Activated CD4-positive, alpha-beta memory T cell treated with anti-CD3 and anti-CD28 coated beads for 36 hours (primary cell): ENCODE measurements at regions of chrX and their contacts with region 1.

Region 1: DNA sequence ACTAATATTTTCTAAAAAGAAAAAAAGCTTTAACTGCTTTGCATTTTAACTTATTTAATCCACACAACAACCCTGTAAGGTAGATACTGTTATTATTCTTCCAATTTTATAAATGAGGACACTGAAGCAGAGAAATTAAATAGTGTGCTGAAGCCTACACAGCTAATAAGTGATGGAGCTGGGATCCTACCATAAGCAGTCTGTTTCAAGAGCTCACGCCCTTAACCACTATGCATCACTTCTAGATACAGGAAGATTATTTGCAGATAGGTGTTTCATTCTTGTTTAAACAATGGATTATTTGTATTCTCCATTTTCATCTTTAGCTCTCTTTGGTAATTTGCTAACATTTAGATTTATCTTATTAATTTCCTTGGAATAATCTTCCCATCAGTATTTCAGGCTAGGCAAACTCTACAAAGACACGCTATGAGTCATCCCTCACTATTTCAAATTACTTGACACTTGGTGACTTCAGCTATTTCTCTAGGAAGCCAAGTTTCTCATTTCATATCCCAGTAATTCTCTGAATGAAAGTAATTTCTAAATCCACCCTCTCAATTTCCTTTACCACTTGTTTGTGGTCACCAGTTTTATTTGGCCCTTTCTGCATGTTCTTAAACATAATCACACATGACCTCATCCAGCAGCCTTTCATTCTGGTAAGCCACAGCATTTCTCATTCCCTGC is 67.3 kb downstream of the ASB9 start:
- DNase-seq: no peak
- H3K4me3 Mint-ChIP-seq: no peak overlapping the region
- H3K27ac Mint-ChIP-seq: no peak overlapping the region
- H3K4me1 Mint-ChIP-seq: peaks cover 47% of the 10 kb centered on the region
- H3K27me3 Mint-ChIP-seq: no peaks in the 10 kb centered on the region

Region 2: DNA sequence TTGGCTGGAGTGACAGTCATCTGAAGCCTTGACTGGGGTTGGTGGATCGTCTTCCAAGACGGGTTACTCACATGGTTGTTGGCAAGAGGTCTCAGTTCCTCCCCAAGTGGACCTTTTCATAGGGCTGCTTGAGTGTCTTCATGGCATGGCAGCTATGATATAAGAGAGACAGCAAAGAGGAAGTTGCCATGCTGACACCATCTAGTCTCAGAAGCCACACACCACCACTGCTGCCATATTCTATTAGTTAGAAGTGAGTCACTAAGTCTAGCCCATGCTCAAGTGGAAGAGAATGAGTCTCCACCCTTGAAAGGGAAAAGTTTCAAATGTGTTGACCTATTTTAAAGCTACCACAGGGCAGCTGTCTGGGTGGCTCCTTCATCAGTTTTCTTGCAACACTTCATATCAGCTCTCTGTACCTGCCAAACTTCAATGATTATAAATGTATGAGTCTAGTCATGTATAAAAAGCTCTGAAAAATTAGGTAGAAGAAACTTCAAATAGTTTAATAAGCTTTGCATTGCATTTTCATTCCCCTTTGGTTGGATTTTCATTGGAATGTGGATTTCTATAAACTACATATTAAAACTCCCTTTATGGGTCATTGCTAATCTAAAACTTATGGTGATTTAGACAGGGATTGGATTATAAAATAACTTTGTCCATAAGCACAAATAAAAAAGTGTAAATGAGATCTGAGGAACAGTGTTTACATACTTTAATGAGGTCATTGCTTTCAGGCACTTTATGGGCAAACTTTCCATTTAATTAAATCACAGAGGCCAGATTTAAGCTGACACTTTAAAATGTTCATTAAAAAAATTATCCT is 1814.7 kb before region 1 on chrX:
- CTCF ChIA-PET with region 1: no interaction called
- POLR2A ChIA-PET with region 1: no interaction called
- intact Hi-C with region 1: no loop called
- DNase-seq: peak; percentile 34
- H3K4me3 Mint-ChIP-seq: no peak overlapping the region
- H3K27ac Mint-ChIP-seq: no peak overlapping the region
- H3K4me1 Mint-ChIP-seq: peaks cover 8% of the 10 kb centered on the region
- H3K27me3 Mint-ChIP-seq: no peaks in the 10 kb centered on the region

Region 3: DNA sequence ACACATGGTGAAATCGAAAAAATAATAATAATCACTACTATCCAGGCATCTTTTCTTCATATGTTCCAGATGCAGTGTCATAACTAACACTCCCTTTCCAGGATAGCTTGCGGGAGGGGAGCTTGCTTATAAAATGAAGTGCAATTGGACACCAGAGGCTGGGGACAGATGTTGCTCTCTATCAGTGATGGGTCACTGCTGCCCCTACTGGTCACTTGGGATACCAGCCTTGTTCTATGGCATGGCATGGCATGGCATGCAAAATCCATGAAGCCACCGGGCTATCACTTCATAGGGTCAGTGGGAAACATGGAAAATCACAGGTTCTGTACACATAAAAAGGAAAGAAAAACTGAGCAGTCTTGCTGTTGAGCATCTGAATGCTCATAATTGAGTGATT is 505.1 kb before region 1 on chrX:
- CTCF ChIA-PET with region 1: no interaction called
- POLR2A ChIA-PET with region 1: no interaction called
- intact Hi-C with region 1: no loop called
- DNase-seq: peak; percentile 26
- H3K4me3 Mint-ChIP-seq: no peak overlapping the region
- H3K27ac Mint-ChIP-seq: no peak overlapping the region
- H3K4me1 Mint-ChIP-seq: no peaks in the 10 kb centered on the region
- H3K27me3 Mint-ChIP-seq: no peaks in the 10 kb centered on the region

Region 4: GRCh38 chrX:14798805-14799397 is 403.7 kb before region 1 on chrX:
- CTCF ChIA-PET with region 1: no interaction called
- POLR2A ChIA-PET with region 1: no interaction called
- intact Hi-C with region 1: loop called (anchors 1 kb)
- DNase-seq: peak; percentile 12
- H3K4me3 Mint-ChIP-seq: no peak overlapping the region
- H3K27ac Mint-ChIP-seq: no peak overlapping the region
- H3K4me1 Mint-ChIP-seq: peaks cover 18% of the 10 kb centered on the region
- H3K27me3 Mint-ChIP-seq: peaks cover 2% of the 10 kb centered on the region

Region 5: DNA sequence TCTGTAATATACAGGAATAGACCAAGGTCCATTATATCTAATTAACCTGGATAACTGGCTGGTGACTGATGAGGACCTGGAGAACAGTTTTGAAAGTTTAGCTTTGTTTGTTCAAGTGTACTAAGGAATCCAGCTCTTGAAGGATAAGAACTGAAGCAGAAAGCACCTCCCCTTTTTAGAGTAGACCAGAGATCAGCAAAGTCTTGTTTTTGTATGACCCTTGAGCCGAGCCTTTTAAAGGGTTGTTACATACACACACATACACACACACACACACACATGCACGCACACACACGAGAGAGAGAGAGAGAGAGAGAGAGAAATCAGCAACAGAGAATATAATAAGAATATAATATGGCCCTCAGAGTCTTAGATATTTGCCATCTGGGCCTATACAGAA is 316.3 kb before region 1 on chrX:
- CTCF ChIA-PET with region 1: no interaction called
- POLR2A ChIA-PET with region 1: no interaction called
- intact Hi-C with region 1: loop called (anchors 2 kb)
- DNase-seq: no peak
- H3K4me3 Mint-ChIP-seq: no peak overlapping the region
- H3K27ac Mint-ChIP-seq: no peak overlapping the region
- H3K4me1 Mint-ChIP-seq: peaks cover 35% of the 10 kb centered on the region
- H3K27me3 Mint-ChIP-seq: no peaks in the 10 kb centered on the region

Region 6: GRCh38 chrX:15116900-15117299 is 85.7 kb before region 1 on chrX:
- CTCF ChIA-PET with region 1: no interaction called
- POLR2A ChIA-PET with region 1: no interaction called
- intact Hi-C with region 1: loop called (anchors 1 kb)
- DNase-seq: no peak
- H3K4me3 Mint-ChIP-seq: no peak overlapping the region
- H3K27ac Mint-ChIP-seq: no peak overlapping the region
- H3K4me1 Mint-ChIP-seq: peaks cover 8% of the 10 kb centered on the region
- H3K27me3 Mint-ChIP-seq: no peaks in the 10 kb centered on the region

Region 7: GRCh38 chrX:15158736-15159406 is 43.7 kb before region 1 on chrX:
- CTCF ChIA-PET with region 1: interaction called, 5 read pairs
- POLR2A ChIA-PET with region 1: interaction called, 4 read pairs
- intact Hi-C with region 1: loop called (anchors 1 kb)
- DNase-seq: peak; percentile 51
- H3K4me3 Mint-ChIP-seq: peak overlapping the region; percentile 57
- H3K27ac Mint-ChIP-seq: peak overlapping the region; percentile 70
- H3K4me1 Mint-ChIP-seq: peaks cover 34% of the 10 kb centered on the region
- H3K27me3 Mint-ChIP-seq: peaks cover 2% of the 10 kb centered on the region

Region 8: DNA sequence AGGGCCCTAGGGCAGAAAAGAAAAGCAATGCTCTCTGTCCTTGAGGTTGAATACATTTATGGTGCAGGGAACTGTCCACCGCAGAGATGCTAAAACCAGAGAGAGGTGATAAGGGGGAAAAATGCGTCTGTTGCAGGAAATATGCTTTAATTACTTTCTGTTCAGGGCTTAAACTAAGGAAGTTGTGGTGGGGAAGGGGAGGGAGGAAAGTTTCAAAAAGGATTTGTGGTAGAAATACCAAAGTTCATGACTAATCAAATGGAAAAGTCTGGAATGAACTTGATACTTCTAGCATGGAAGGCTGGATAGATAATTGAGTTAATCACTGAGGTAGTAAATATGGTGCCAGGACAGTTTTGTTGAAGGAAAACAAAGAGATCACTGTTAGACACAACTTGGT is 31.7 kb before region 1 on chrX:
- CTCF ChIA-PET with region 1: no interaction called
- POLR2A ChIA-PET with region 1: no interaction called
- intact Hi-C with region 1: no loop called
- DNase-seq: no peak
- H3K4me3 Mint-ChIP-seq: no peak overlapping the region
- H3K27ac Mint-ChIP-seq: no peak overlapping the region
- H3K4me1 Mint-ChIP-seq: peaks cover 7% of the 10 kb centered on the region
- H3K27me3 Mint-ChIP-seq: no peaks in the 10 kb centered on the region

Region 9: DNA sequence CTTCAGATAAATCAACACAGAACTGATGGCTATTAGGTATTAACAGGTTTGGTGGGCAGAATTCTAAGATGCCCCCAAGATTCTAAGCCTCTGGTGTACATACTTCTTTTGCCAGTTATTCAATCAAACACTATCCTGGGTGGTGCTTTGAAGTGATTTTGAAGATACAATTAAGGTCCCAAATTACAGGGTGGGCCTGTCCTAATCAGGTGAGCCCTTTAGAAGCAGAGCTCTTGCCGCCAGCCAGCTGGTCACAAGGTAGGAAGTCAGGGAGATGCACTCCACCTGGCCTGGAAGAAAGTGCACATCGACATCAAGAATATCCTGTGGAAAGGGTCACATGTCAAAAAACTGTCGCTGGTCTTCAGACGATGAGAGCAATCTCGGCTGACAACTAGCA is 37.8 kb after region 1 on chrX:
- CTCF ChIA-PET with region 1: no interaction called
- POLR2A ChIA-PET with region 1: no interaction called
- intact Hi-C with region 1: no loop called
- DNase-seq: no peak
- H3K4me3 Mint-ChIP-seq: no peak overlapping the region
- H3K27ac Mint-ChIP-seq: no peak overlapping the region
- H3K4me1 Mint-ChIP-seq: no peaks in the 10 kb centered on the region
- H3K27me3 Mint-ChIP-seq: no peaks in the 10 kb centered on the region